ENCODE measurements at regions of chr10 and their contacts with region 1.

Region 1: DNA sequence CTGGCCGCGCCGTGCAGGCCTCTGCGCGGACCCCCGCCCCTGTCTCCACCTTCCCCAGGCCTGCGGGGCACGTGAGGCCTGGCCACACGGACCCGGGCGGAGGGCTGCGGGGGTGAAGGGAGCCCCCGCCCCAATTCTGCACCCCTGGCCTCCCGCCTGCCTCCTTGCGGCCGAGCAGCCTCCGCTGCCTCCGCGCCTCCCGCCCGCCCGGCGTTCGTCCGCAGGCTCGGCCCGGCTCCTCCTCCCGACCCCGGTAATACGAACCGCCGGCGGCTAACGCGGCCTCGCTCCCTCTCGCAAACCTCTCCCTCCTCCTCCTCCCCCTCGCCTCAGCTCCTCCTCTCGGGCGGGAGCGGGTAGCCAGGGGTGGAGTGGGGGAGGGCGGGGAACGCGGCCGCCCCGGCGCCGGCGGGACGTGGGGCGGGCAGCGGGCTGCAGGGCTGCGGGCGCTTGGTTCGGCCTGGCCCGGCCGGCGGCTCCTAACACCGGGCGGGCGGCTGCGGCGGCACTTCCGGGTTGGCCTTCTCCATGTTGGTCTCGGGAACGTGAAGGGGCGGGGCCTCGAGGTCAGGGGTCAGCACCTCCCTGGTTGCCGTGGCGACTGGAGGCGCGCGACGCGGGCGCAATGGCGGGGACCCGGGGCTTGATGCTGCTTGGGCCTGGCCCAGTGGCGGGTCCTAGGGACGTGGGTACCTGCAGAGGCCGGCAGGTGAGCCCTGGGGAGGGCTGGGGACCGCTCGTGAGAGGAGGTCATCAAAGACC is at the start of gene RAB11FIP2:
- DNase-seq: peak; percentile 92 to 93
- ATAC-seq: peak; percentile 92 to 93
- H3K4me3 ChIP-seq: peak within 1 kb of the TSS; percentile 74 to 92 (median 78)
- H3K27ac ChIP-seq: peak within 1 kb of the TSS; percentile 87 to 96 (median 92)
- H3K4me1 ChIP-seq: peaks cover 36 to 48% of the 10 kb centered on the region in 2 donors
- H3K27me3 ChIP-seq: no peaks in the 10 kb centered on the region
- CTCF ChIP-seq: peak in 1 of 5 experiments; percentile 14
- POLR2A ChIP-seq: peak; percentile 72 to 81
- total RNA-seq, gene RAB11FIP2: 9.6 to 15.5 (median 11.3) TPM

Region 2: GRCh38 chr10:117375360-117376178 is 671.0 kb before region 1 on chr10 and contains the start of gene PDZD8:
- in situ Hi-C with region 1: no loop called
- intact Hi-C with region 1: loop called (anchors 5 kb)
- DNase-seq: peak; percentile 87 to 89
- ATAC-seq: peak; percentile 90 to 91
- H3K4me3 ChIP-seq: peak within 1 kb of the TSS; percentile 84 to 96 (median 95)
- H3K27ac ChIP-seq: peak within 1 kb of the TSS; percentile 87 to 94 (median 92)
- H3K4me1 ChIP-seq: peaks cover 29 to 31% of the 10 kb centered on the region in 2 donors
- H3K27me3 ChIP-seq: peaks cover 0 to 2% (median 0%) of the 10 kb centered on the region in 3 donors
- CTCF ChIP-seq: peak in 1 of 5 experiments; percentile 12
- POLR2A ChIP-seq: peak; percentile 90 to 94
- total RNA-seq, gene PDZD8: 15.9 to 25.0 (median 18.1) TPM

Region 3: DNA sequence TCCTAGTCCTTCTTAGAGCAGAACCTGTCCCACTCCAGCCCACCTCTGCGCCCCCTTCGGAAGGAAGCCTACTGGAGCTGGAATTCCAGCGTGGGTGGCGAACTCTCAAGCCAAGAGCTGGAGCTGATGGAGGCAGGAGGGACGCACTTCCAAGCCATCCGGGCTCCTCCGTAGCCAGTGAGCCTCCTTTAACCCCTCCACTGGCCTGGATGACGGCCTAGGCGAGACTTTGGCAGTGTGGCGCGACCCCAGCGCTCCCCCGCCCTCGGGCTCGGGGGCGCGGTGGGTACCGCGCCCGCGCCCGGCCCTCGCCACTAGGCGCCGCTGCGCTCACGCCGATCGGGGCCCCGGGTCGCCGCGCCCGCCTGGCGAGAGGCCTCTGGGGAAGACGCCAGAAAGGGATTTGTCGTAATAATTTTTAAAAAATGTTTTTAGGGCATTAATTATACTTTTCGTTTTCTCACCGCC is 509.1 kb before region 1 on chr10:
- in situ Hi-C with region 1: no loop called
- intact Hi-C with region 1: loop called (anchors 1 kb)
- DNase-seq: no peak
- ATAC-seq: peak in 1 of 2 donors; percentile 44
- H3K4me3 ChIP-seq: peak overlapping the region; percentile 7 to 45 (median 37)
- H3K27ac ChIP-seq: peak overlapping the region in 1 of 4 donors; percentile 33
- H3K4me1 ChIP-seq: peaks cover 8 to 20% of the 10 kb centered on the region in 2 donors
- H3K27me3 ChIP-seq: peaks cover 85 to 89% (median 86%) of the 10 kb centered on the region in 3 donors
- CTCF ChIP-seq: peak; percentile 38 to 76 (median 64)
- POLR2A ChIP-seq: no peak

Region 4: DNA sequence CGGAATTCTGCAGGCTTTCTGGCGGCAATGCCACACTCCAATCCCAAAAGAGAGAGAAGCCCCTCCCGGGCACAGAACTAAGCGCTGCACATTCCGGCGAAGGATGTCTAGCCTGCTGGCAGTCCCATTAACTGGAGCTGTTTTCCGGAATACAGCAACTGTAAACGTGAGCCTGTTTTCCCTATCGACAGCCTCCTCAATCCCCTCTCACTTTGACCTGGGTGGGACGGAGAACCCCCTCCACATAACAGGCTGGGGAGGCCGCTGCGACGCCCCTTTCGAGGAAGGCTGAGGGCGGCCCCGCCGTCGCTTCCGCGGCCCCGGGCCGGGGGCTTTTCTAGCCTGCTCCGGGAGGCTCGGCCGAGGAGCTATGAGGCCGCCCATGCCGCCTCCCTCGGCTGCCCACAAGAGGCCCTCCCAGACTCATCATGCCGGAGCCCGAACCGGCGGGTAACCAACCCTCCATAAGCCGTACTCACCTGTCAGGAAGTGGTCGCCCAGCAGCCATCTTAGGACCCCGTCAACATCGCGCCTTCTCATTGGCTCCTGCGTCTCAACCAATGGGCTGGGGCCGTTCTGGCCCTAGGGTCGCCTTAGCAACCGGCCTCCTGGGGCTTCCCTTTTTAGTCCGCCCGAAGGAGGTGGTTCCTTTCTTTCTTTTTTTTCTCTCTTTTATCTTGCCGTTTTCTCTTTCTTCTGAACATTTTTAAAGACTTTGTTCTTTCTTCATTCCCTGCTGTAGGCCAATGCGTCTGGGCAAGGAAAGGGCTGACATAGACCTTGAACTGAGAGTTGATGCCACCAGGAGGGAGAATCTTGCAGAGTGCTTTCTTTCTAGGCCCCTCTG is 295.4 kb after region 1 on chr10 and contains the start of gene FAM204A:
- in situ Hi-C with region 1: loop called in 2 of 4 experiments (anchors 25 kb)
- intact Hi-C with region 1: loop called (anchors 2 kb)
- DNase-seq: peak; percentile 87 to 93
- ATAC-seq: peak; percentile 96 to 98
- H3K4me3 ChIP-seq: peak within 1 kb of the TSS; percentile 92 to 96 (median 94)
- H3K27ac ChIP-seq: peak within 1 kb of the TSS; percentile 87 to 94 (median 90)
- H3K4me1 ChIP-seq: peaks cover 46 to 50% of the 10 kb centered on the region in 2 donors
- H3K27me3 ChIP-seq: no peaks in the 10 kb centered on the region
- CTCF ChIP-seq: no peak
- POLR2A ChIP-seq: peak; percentile 48 to 52
- total RNA-seq, gene FAM204A: 57.1 to 100 (median 59.6) TPM

Region 5: GRCh38 chr10:118698421-118698820 is 651.8 kb after region 1 on chr10:
- in situ Hi-C with region 1: no loop called
- intact Hi-C with region 1: no loop called
- DNase-seq: no peak
- ATAC-seq: peak in 1 of 2 donors; percentile 27
- H3K4me3 ChIP-seq: no peak overlapping the region
- H3K27ac ChIP-seq: no peak overlapping the region
- H3K4me1 ChIP-seq: no peaks in the 10 kb centered on the region
- H3K27me3 ChIP-seq: no peaks in the 10 kb centered on the region
- CTCF ChIP-seq: no peak
- POLR2A ChIP-seq: no peak

Measured in gastrocnemius medialis (tissue), 4 donors.